Aorta (tissue), 5 donors: ENCODE measurements at regions of chr3 and their contacts with region 1.

Region 1: GRCh38 chr3:155701882-155702465 is 42.9 kb downstream of the PLCH1 start:
- DNase-seq: no peak
- ATAC-seq: peak; percentile 72
- H3K4me3 ChIP-seq: no peak overlapping the region
- H3K27ac ChIP-seq: no peak overlapping the region
- H3K4me1 ChIP-seq: no peaks in the 10 kb centered on the region
- H3K27me3 ChIP-seq: no peaks in the 10 kb centered on the region

Region 2: DNA sequence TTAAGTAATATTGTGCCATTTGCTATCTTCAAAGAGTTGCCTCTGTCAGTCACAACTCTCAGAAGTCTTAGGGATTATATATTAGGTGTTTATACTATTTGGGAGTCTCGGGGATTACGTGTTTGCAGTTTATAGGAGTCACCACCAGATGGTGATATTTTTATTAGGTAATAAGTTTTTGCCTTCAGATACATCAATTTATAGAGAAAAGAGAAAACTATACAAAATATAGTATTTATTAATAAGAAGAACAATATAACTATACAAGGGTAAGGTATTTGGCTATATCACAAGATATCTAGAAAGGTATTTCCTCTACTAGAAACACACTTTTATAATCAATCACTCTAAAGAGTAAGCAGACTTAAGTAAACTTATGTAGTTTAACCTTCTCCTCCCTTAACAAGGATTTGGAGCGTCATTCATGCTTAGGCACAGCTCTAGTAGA is 1367.0 kb before region 1 on chr3:
- intact Hi-C with region 1: loop called (anchors 5 kb)
- DNase-seq: no peak
- ATAC-seq: no peak
- H3K4me3 ChIP-seq: no peak overlapping the region
- H3K27ac ChIP-seq: no peak overlapping the region
- H3K4me1 ChIP-seq: no peaks in the 10 kb centered on the region
- H3K27me3 ChIP-seq: no peaks in the 10 kb centered on the region

Region 3: GRCh38 chr3:154758109-154758868 is 943.7 kb before region 1 on chr3:
- intact Hi-C with region 1: loop called in 1 of 2 experiments (anchors 10 kb)
- DNase-seq: no peak
- ATAC-seq: no peak
- H3K4me3 ChIP-seq: no peak overlapping the region
- H3K27ac ChIP-seq: no peak overlapping the region
- H3K4me1 ChIP-seq: no peaks in the 10 kb centered on the region
- H3K27me3 ChIP-seq: no peaks in the 10 kb centered on the region

Region 4: DNA sequence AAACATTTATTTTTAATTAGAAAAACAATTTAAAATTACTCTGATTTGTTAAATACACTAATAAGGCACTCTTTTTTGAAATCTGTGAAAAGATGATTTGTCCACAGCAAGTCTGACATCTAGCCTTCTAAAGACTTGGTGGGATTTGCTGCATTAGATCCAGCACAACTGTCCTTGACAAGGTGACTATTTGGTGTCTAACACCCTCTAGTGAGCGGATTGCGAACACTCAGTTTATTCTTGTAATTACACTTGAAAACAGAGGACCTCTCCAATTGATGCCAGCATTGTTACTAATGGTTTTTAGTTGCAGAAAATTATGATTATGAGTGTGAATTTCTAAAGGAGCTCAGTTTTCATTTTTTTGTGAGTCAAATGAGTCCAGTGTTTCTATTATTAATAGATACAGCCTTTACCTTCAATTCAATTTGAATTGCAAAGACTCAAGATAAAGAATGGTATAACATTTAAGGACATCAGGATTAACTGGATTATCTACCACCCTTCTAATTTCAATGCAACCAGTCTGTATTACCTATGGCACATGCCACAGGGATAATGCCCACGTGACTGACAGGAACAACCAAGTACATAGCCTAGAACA is 378.8 kb before region 1 on chr3:
- intact Hi-C with region 1: no loop called
- DNase-seq: no peak
- ATAC-seq: peak; percentile 60
- H3K4me3 ChIP-seq: no peak overlapping the region
- H3K27ac ChIP-seq: no peak overlapping the region
- H3K4me1 ChIP-seq: no peaks in the 10 kb centered on the region
- H3K27me3 ChIP-seq: no peaks in the 10 kb centered on the region

Region 5: GRCh38 chr3:155352900-155353490 is 349.0 kb before region 1 on chr3:
- intact Hi-C with region 1: loop called (anchors 2 kb)
- DNase-seq: no peak
- ATAC-seq: no peak
- H3K4me3 ChIP-seq: no peak overlapping the region
- H3K27ac ChIP-seq: no peak overlapping the region
- H3K4me1 ChIP-seq: no peaks in the 10 kb centered on the region
- H3K27me3 ChIP-seq: no peaks in the 10 kb centered on the region

Region 6: DNA sequence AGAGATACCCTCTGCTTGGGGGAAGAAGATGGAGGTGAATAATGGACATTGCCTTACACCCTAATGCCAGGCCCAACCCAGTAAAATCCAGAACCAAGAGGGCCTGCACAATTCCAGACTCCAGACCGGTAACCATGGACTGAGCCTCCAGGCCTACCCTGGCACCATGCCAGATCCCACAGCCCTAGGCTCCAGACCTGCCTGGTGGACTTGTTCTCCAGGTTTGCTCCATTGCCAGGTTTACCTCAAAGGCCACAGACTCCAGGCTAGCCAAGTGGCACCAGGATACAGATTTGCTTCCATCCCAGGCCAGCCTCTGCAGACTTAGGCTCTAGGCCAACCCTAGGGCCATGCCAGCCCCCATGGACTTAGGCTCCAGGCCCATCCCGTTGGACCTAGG is 28.9 kb after region 1 on chr3:
- intact Hi-C with region 1: no loop called
- DNase-seq: no peak
- ATAC-seq: no peak
- H3K4me3 ChIP-seq: no peak overlapping the region
- H3K27ac ChIP-seq: no peak overlapping the region
- H3K4me1 ChIP-seq: no peaks in the 10 kb centered on the region
- H3K27me3 ChIP-seq: no peaks in the 10 kb centered on the region